ENCODE measurements at regions of chr5 and their contacts with region 1.

Region 1: GRCh38 chr5:116557669-116558271 is 16.9 kb downstream of the SEMA6A start:
- DNase-seq: no peak
- H3K4me3 Mint-ChIP-seq: no peak overlapping the region
- H3K27ac Mint-ChIP-seq: no peak overlapping the region
- H3K4me1 Mint-ChIP-seq: no peaks in the 10 kb centered on the region
- H3K27me3 Mint-ChIP-seq: peaks cover 6% of the 10 kb centered on the region

Region 2: GRCh38 chr5:116947691-116948528 is 390.1 kb after region 1 on chr5:
- intact Hi-C with region 1: loop called (anchors 5 kb)
- DNase-seq: peak; percentile 38
- H3K4me3 Mint-ChIP-seq: no peak overlapping the region
- H3K27ac Mint-ChIP-seq: no peak overlapping the region
- H3K4me1 Mint-ChIP-seq: no peaks in the 10 kb centered on the region
- H3K27me3 Mint-ChIP-seq: no peaks in the 10 kb centered on the region

Region 3: GRCh38 chr5:116970318-116970717 is 412.5 kb after region 1 on chr5:
- intact Hi-C with region 1: no loop called
- DNase-seq: no peak
- H3K4me3 Mint-ChIP-seq: no peak overlapping the region
- H3K27ac Mint-ChIP-seq: no peak overlapping the region
- H3K4me1 Mint-ChIP-seq: no peaks in the 10 kb centered on the region
- H3K27me3 Mint-ChIP-seq: no peaks in the 10 kb centered on the region

Measured in activated T-helper 1 cell treated with anti-CD3 and anti-CD28 coated beads, Interleukin-12 subunit alpha, Interleukin-12 subunit beta, Interleukin-2, Interleukin-4 antibody, amounts not matched to agents 30 ng/mL and 10 ng/mL and 1 ng/mL, durations not matched to agents 14 hours and 24 hours and 36 hours (primary cell).